ENCODE measurements at regions of chr13 and their contacts with region 1.

Region 1: DNA sequence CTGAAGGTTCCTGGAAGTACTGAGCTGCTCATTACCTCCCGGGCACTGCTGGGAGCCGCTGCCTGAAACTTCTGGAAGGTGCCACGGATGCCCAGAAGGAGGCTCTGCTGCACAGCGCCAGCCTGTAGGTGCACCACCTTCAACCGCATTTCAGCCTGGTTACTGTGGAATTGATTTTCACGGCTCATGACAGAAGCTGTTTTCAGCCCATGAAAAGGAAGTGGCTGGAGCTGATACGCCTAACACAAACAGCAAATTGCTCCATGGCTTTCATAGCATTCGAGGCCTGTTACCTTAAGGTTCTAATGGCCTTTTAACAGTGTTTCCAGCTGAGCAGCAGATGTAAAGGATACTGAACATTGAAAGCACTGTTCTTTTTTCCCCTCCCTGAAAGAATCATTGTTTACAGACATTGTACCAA is 22.0 kb downstream of the GPC6 start:
- DNase-seq: no peak
- H3K4me3 ChIP-seq: no peak overlapping the region
- H3K27ac ChIP-seq: peak overlapping the region; percentile 80
- H3K4me1 ChIP-seq: peaks cover 30% of the 10 kb centered on the region
- H3K27me3 ChIP-seq: no peaks in the 10 kb centered on the region
- CTCF ChIP-seq: peak in 1 of 2 donors; percentile 12

Region 2: DNA sequence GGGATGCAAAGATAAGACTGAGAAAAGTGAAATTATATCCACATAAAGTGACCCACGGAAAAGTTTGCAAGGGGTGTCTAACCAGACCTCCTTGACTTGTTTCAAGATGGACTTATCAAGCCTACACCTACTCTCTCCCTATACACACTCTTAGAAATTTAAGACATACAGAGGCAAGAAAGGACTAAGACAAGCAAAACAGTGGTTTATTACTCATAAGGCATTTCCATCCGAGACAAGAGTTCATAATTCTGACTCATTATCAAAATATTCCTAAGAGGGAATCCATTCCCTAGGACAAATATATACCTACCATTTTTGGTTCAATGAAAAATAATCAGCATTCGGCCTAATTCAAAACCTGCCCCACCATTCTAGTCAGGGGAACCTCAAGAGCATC is 254.6 kb before region 1 on chr13:
- CTCF ChIA-PET with region 1: no interaction called
- dilution Hi-C with region 1: no loop called
- in situ Hi-C with region 1: no loop called
- intact Hi-C with region 1: loop called (anchors 5 kb)
- DNase-seq: peak; percentile 78
- H3K4me3 ChIP-seq: no peak overlapping the region
- H3K27ac ChIP-seq: no peak overlapping the region
- H3K4me1 ChIP-seq: peaks cover 19% of the 10 kb centered on the region
- H3K27me3 ChIP-seq: no peaks in the 10 kb centered on the region
- CTCF ChIP-seq: no peak

Region 3: GRCh38 chr13:93262729-93263345 is 14.2 kb after region 1 on chr13:
- CTCF ChIA-PET with region 1: no interaction called
- dilution Hi-C with region 1: no loop called
- in situ Hi-C with region 1: no loop called
- intact Hi-C with region 1: no loop called
- DNase-seq: peak; percentile 71
- H3K4me3 ChIP-seq: no peak overlapping the region
- H3K27ac ChIP-seq: peak overlapping the region; percentile 14
- H3K4me1 ChIP-seq: peaks cover 8% of the 10 kb centered on the region
- H3K27me3 ChIP-seq: no peaks in the 10 kb centered on the region
- CTCF ChIP-seq: no peak